ENCODE measurements at regions of chr1 and their contacts with region 1.

Region 1: GRCh38 chr1:114757455-114758250 is at the start of gene CSDE1:
- DNase-seq: peak; percentile 99
- H3K4me3 Mint-ChIP-seq: peak within 1 kb of the TSS; percentile 99
- H3K27ac Mint-ChIP-seq: peak within 1 kb of the TSS; percentile 100
- H3K4me1 Mint-ChIP-seq: peaks cover 45% of the 10 kb centered on the region
- H3K27me3 Mint-ChIP-seq: peaks cover 2% of the 10 kb centered on the region
- total RNA-seq, gene CSDE1: 418 and 419 TPM in 2 replicates

Region 2: DNA sequence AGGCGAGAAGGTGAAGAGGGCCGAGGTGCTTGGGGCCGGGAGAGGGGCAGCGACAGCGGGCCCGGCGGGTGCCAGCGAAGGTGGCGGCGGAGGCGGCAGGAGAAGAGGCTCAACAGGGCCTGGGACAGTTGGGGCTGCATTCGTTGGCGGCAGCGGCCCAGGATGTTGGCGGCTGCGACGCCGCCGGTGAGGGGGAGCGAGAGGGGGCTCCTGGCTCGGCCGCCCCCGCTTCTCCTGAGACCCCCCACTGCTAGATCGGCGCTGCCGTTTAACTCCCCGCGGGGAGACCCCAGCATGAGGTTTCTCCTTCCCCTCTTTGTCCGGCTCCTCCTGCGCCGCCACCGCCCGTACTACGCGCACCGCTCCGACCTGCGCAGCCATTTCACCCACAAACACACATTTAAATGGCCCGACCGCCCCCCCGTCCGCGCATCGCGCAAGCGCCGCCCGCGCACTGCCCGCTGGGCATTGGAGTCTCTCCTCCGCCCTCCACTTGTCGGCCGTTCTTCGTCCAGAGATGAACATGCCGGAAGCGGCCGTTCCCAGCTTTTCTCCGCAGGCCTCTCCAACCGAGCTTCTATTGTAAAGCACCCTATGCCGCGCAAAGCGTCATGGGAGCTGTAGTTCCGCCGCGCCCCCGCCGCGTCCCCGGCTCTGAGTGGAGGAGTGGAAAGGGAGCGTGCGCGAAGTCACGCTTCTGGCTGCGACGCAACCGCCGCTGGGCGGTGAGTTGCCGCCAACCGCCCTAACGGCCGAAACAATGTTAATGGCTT is 945.6 kb before region 1 on chr1 and contains the start of gene RSBN1:
- intact Hi-C with region 1: loop called (anchors 2 kb)
- DNase-seq: peak; percentile 100
- H3K4me3 Mint-ChIP-seq: peak within 1 kb of the TSS; percentile 96
- H3K27ac Mint-ChIP-seq: peak within 1 kb of the TSS; percentile 96
- H3K4me1 Mint-ChIP-seq: peaks cover 21% of the 10 kb centered on the region
- H3K27me3 Mint-ChIP-seq: no peaks in the 10 kb centered on the region
- total RNA-seq, gene RSBN1: 20.9 and 21.5 TPM in 2 replicates

Region 3: GRCh38 chr1:114346480-114347029 is 411.1 kb before region 1 on chr1:
- intact Hi-C with region 1: loop called (anchors 1 kb)
- DNase-seq: peak; percentile 100
- H3K4me3 Mint-ChIP-seq: peak overlapping the region; percentile 86
- H3K27ac Mint-ChIP-seq: peak overlapping the region; percentile 84
- H3K4me1 Mint-ChIP-seq: peaks cover 14% of the 10 kb centered on the region
- H3K27me3 Mint-ChIP-seq: no peaks in the 10 kb centered on the region

Region 4: GRCh38 chr1:114511032-114511785 is 246.4 kb before region 1 on chr1 and contains the start of gene TRIM33:
- intact Hi-C with region 1: loop called (anchors 1 kb)
- DNase-seq: peak; percentile 98
- H3K4me3 Mint-ChIP-seq: peak within 1 kb of the TSS; percentile 96
- H3K27ac Mint-ChIP-seq: peak within 1 kb of the TSS; percentile 98
- H3K4me1 Mint-ChIP-seq: peaks cover 41% of the 10 kb centered on the region
- H3K27me3 Mint-ChIP-seq: peaks cover 2% of the 10 kb centered on the region
- total RNA-seq, gene TRIM33: 37.7 and 39.7 TPM in 2 replicates

Region 5: DNA sequence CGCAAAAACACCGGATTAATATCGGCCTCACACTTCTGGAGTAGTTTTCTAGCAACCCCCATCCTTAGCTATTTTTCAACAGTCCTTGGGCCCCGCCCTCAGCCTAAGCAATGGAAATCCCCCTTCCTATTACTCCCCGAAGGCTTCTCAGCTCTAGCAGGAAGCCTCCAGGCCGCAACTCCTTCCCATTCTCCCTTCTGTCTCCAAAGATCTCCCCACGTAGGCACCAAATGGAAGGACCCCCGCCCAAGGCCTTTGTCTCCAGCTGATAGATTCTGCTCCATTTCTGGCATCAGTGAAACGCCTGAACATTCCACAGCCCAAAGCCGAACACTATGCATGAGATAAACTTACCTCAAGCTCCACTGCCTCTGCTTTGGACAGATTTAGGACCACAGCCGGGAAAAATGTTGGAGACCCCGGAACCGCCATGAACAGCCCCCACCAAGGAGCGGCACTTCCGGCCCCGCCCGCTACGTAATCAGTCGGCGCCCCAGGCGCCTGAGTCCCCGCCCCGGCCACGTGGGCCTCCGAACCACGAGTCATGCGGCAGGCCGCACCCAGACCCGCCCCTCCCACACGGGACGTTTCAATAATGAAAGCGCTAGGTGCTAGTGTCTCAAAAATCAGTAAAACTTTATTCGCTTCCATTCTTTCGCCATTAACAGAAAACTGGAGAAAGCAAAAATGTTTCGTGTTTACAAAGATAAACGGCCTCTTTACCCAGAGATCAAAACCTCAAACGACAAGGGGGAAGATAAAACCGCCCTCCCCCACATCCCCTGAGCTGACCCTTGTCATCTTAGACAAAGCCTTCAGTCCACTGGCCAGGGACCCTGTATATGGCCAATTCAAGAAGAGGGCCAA is 41.1 kb before region 1 on chr1 and contains the start of gene NRAS:
- intact Hi-C with region 1: loop called (anchors 1 kb)
- DNase-seq: peak; percentile 99
- H3K4me3 Mint-ChIP-seq: peak within 1 kb of the TSS; percentile 95
- H3K27ac Mint-ChIP-seq: peak within 1 kb of the TSS; percentile 93
- H3K4me1 Mint-ChIP-seq: peaks cover 20% of the 10 kb centered on the region
- H3K27me3 Mint-ChIP-seq: no peaks in the 10 kb centered on the region
- total RNA-seq, gene NRAS: 60.7 and 61.4 TPM in 2 replicates

Region 6: GRCh38 chr1:114780344-114781226 is 22.9 kb after region 1 on chr1 and contains the start of gene SIKE1:
- intact Hi-C with region 1: loop called (anchors 1 kb)
- DNase-seq: peak; percentile 98
- H3K4me3 Mint-ChIP-seq: peak within 1 kb of the TSS; percentile 100
- H3K27ac Mint-ChIP-seq: peak within 1 kb of the TSS; percentile 99
- H3K4me1 Mint-ChIP-seq: peaks cover 18% of the 10 kb centered on the region
- H3K27me3 Mint-ChIP-seq: peaks cover 8% of the 10 kb centered on the region
- total RNA-seq, gene SIKE1: 64.4 and 65.8 TPM in 2 replicates

Region 7: DNA sequence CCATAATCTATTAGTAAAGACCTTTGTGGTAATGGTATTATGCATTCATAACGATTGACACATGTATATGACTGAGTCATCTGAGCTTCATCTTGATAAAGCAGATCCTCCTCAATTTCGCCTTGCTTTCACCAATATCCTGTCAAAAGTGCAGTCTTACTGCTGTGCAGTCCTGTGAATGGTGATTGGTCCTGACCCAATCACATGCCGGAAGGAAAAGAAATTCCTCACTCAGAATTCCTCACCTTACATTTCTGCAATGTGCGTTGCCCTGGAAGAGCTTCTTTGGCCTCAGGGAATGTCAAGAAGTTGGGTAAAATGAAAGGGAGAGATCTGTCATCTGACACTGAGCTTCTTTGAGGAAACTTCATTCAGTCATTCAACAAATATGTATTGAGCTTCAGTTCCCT is 452.7 kb after region 1 on chr1:
- intact Hi-C with region 1: no loop called
- DNase-seq: no peak
- H3K4me3 Mint-ChIP-seq: no peak overlapping the region
- H3K27ac Mint-ChIP-seq: no peak overlapping the region
- H3K4me1 Mint-ChIP-seq: no peaks in the 10 kb centered on the region
- H3K27me3 Mint-ChIP-seq: peaks cover 6% of the 10 kb centered on the region

Region 8: DNA sequence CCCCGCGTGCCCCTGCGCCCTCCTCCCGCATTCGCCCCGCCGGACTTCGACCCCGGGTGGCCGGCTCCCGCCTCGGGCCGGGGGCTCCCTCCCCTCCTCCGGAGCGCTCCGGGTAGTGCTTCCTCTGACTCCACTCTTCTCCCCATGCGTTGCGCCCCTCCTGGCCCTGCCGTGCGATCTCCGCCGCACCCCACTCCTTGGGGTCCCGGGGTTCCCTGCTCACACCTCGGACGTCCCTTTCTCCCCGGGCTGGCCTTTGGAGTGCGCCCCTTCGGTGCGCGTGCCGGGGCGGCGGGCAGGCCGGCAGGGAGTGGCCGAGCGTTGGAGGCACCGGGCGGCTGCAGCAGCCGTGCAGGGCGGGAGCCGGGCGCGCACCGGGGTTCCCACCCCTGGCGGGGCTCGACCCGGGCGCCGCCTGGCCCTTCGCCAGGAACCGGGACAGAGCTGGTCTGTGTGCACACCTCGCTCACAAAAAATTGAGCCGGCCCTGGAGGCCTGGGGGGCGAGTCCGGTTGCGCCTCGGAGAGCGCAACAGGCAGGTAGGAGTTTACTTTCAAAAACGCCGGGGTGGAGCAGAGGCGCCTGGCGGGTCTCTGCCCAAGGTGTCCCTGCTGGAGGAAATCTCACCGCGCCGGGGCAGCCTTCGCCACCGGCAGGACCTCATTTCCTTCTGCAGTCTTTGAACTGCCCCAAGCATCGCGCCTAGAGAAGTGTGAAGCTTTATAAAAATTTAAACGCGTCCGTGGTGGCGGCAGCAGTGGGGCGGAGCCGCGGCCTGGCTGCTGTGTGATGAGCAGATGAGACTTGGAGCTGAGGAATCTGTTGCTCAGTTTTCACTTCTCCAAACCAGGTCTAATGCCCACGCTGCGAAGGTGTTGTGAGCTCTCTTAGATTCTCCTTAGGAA is 884.8 kb after region 1 on chr1:
- intact Hi-C with region 1: loop called (anchors 10 kb)
- DNase-seq: peak; percentile 82
- H3K4me3 Mint-ChIP-seq: peak overlapping the region; percentile 87
- H3K27ac Mint-ChIP-seq: peak overlapping the region; percentile 57
- H3K4me1 Mint-ChIP-seq: peaks cover 19% of the 10 kb centered on the region
- H3K27me3 Mint-ChIP-seq: peaks cover 27% of the 10 kb centered on the region